MCF 10A (cell line): ENCODE measurements at regions of chr1 and their contacts with region 1.

Region 1: GRCh38 chr1:47399138-47399845 is 16.8 kb upstream of the FOXE3 start:
- DNase-seq: no peak
- H3K4me3 Mint-ChIP-seq: no peak overlapping the region
- H3K27ac Mint-ChIP-seq: no peak overlapping the region
- H3K4me1 Mint-ChIP-seq: no peaks in the 10 kb centered on the region
- H3K27me3 Mint-ChIP-seq: no peaks in the 10 kb centered on the region
- CTCF ChIP-seq: no peak

Region 2: DNA sequence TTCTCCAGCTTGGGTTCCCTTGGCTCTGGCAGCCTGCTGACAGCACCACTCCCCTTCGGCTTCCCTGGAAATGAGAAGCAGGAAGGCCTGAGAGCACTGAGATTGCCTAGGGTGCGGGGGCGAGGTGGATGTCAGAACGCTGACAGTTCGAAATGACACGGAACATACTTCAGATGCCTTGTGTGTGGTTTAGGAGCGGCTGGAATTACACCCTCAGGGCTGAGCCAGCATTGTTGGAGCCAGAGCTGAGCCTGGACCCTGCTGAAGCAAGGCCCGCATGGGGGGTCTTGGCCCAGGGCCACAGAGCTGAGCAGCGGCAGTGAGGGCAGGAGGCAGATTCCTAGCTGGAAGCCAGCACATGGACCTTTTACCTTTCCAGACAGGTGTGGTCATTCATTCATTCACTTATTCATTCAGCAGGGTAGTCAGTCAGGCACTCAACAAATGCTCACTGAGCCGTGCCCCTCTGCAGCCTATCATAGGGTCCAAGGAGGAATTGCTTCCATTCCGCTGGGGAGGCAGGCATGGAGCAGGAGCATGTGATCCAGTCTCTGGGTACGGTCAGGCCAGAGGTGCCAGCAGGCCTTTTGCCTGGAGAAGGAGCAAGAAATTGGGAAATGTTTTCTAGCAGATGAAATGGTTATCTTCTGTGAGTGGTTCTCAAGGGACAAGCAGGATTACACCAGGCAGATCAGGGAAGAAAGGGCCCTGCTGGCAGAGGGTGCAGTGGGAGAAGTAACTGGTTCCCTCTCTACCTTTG is 10.2 kb after region 1 on chr1:
- CTCF ChIA-PET with region 1: interaction called, 18 read pairs
- POLR2A ChIA-PET with region 1: interaction called, 5 read pairs
- intact Hi-C with region 1: no loop called
- DNase-seq: peak; percentile 83
- H3K4me3 Mint-ChIP-seq: peak overlapping the region; percentile 42
- H3K27ac Mint-ChIP-seq: peak overlapping the region; percentile 68
- H3K4me1 Mint-ChIP-seq: peaks cover 38% of the 10 kb centered on the region
- H3K27me3 Mint-ChIP-seq: no peaks in the 10 kb centered on the region
- CTCF ChIP-seq: no peak

Region 3: DNA sequence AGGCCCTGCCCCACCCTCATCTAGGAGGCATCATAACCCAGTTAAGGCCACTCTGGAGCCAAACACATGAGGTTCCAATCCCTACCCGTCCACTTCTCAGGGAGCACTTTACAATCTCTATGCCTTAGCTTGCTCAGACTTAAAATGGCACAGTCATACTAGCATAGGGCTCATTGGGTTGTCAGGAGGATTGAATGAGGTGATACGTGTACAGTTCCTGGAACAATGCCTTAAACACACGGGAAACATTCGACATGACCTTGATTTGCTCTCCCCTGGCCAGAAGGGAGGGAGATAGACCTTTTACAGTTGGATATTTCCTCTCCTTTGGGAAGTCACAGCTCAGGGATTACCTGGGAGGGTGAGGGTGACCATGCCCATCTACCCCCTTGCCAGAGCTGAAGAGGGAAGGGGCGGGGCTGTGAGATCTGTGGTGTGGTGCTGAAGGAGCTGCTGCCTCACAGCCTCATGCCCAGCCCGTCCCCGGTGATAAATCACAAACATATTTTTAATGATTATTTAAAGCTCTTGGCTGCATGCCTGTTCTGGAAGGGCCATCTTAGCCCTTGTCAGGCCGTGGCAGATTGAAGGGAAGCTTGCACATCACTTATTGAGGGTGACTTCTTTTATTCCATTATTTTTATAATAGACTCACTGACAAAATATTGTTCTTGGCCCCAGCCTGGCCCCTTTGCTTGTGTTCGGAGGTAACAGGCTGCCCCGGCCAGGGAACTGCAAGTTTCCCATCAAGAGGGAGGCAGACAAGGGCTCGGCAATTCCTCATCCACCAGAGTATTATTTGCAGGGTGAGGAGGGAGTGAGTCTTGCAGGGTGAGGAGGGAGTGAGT is 122.0 kb after region 1 on chr1:
- CTCF ChIA-PET with region 1: no interaction called
- POLR2A ChIA-PET with region 1: no interaction called
- intact Hi-C with region 1: no loop called
- DNase-seq: no peak
- H3K4me3 Mint-ChIP-seq: no peak overlapping the region
- H3K27ac Mint-ChIP-seq: no peak overlapping the region
- H3K4me1 Mint-ChIP-seq: no peaks in the 10 kb centered on the region
- H3K27me3 Mint-ChIP-seq: no peaks in the 10 kb centered on the region
- CTCF ChIP-seq: no peak